ENCODE measurements at regions of chr6 and their contacts with region 1.

Region 1: GRCh38 chr6:42547407-42548329 is 16.2 kb upstream of the UBR2 start:
- DNase-seq: peak; percentile 92
- H3K4me3 Mint-ChIP-seq: peak overlapping the region; percentile 62
- H3K27ac Mint-ChIP-seq: no peak overlapping the region
- H3K4me1 Mint-ChIP-seq: peaks cover 23% of the 10 kb centered on the region
- H3K27me3 Mint-ChIP-seq: peaks cover 4% of the 10 kb centered on the region

Region 2: GRCh38 chr6:42260972-42261371 is 286.7 kb before region 1 on chr6:
- CTCF ChIA-PET with region 1: interaction called, 120 read pairs
- POLR2A ChIA-PET with region 1: interaction called, 4 read pairs
- intact Hi-C with region 1: loop called (anchors 2 kb)
- DNase-seq: peak; percentile 38
- H3K4me3 Mint-ChIP-seq: no peak overlapping the region
- H3K27ac Mint-ChIP-seq: no peak overlapping the region
- H3K4me1 Mint-ChIP-seq: no peaks in the 10 kb centered on the region
- H3K27me3 Mint-ChIP-seq: no peaks in the 10 kb centered on the region

Region 3: DNA sequence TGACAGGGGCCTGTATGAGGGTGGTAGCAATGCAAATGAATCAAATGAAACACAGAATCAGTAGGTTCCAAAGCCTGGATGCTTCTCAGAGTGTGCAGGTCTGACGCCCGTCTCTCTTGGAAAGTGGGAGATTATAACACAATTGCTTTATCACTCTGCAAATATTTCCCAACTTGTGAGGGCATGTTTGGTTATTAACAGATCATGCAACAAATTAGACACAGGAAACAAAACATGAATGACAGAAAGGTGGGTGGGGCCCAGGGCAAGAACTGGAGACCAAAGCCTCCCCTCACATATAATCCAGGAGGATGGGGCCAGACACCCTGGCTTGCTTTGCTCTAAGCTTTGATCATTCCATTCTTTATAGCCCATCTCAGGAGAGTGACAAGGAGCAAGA is 221.4 kb before region 1 on chr6:
- CTCF ChIA-PET with region 1: interaction called, 14 read pairs
- POLR2A ChIA-PET with region 1: no interaction called
- intact Hi-C with region 1: no loop called
- DNase-seq: no peak
- H3K4me3 Mint-ChIP-seq: no peak overlapping the region
- H3K27ac Mint-ChIP-seq: no peak overlapping the region
- H3K4me1 Mint-ChIP-seq: peaks cover 40% of the 10 kb centered on the region
- H3K27me3 Mint-ChIP-seq: no peaks in the 10 kb centered on the region

Region 4: DNA sequence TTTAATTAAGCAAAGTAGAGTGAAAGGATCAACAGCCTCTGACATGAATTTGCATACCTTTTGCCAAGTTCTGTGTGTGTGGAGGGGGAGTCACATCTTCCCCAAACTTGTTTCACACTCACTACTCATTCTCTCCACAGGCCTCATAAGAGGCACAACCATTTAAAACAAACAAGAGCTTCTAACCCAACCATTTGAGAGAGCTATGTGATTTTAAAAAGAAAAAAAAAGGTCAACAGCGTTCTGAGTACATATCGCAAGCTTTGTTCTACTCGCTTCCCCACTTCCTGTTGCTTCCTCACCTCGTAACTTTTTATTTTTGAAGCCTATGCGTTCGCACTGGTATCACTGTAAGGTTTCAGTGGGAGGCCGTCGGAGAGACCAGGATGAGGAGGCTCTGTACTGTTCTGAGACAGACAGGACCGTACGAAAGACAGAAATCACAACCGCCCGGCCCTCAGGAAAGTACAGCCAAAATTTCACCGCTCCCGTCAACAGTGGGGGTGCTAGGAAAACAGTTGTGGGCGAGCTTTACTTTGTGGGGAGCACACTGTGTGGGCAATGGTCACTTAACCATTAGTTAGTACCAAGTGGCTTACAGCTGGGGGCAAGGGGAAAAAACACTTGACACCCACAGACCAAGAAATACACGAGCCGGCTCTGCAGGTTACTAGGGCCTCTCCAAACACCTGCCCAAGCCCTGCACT is 157.3 kb before region 1 on chr6:
- CTCF ChIA-PET with region 1: interaction called, 43 read pairs
- POLR2A ChIA-PET with region 1: interaction called, 4 read pairs
- intact Hi-C with region 1: no loop called
- DNase-seq: peak; percentile 88
- H3K4me3 Mint-ChIP-seq: peak overlapping the region; percentile 71
- H3K27ac Mint-ChIP-seq: peak overlapping the region; percentile 98
- H3K4me1 Mint-ChIP-seq: peaks cover 96% of the 10 kb centered on the region
- H3K27me3 Mint-ChIP-seq: no peaks in the 10 kb centered on the region

Region 5: DNA sequence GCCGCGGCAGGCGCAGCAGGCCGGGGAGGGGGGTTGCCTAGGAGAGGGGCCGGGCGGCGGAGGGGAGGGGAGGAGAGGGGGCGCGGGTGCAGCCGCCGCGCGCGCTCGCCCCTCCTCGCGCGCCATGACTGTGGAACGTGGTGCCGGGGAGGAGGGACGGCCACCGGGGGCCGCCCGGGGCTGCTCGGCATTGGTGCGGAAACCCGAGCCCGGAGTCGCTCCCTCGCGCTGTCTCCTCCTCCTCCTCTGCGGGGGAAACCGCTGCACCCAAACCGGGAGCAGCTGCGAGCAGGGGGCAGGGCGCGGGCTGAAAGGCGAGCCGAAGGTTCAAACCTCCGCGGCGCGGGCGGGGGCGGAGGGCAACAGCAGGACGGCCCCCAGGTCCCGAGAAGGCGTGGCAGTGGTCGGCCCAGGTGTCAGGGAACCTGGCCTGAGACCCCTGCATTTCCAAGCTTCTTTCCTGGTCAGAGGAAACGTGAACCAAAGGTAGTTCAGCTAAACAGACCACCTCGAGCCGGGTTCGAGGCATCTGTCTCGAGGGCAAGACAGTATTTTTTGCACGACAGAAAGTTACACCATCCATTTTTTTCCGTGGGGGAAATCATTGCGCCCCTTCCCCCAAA is 94.5 kb before region 1 on chr6:
- CTCF ChIA-PET with region 1: interaction called, 24 read pairs
- POLR2A ChIA-PET with region 1: interaction called, 7 read pairs
- intact Hi-C with region 1: loop called (anchors 5 kb)
- DNase-seq: peak; percentile 86
- H3K4me3 Mint-ChIP-seq: peak overlapping the region; percentile 98
- H3K27ac Mint-ChIP-seq: no peak overlapping the region
- H3K4me1 Mint-ChIP-seq: peaks cover 23% of the 10 kb centered on the region
- H3K27me3 Mint-ChIP-seq: no peaks in the 10 kb centered on the region

Region 6: DNA sequence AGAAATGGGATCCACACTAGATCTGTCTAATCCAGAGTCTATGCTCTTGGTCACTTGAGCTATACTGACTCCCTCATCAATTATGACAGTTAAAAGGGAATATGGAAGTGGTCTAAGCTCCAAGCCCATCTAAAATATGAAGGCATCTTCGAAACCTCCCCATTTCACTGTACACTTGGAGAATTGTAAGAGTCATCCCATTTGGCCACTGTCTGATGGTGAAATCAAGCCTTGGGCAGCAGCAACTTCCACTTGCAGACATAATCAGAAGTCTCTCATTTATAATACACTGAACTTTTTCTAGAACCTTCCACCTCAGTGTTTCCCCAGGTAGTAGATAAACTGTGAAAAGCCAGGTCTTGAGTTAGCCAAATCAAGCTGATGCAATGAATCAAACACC is 10.1 kb before region 1 on chr6:
- CTCF ChIA-PET with region 1: interaction called, 42 read pairs
- POLR2A ChIA-PET with region 1: no interaction called
- intact Hi-C with region 1: no loop called
- DNase-seq: no peak
- H3K4me3 Mint-ChIP-seq: no peak overlapping the region
- H3K27ac Mint-ChIP-seq: no peak overlapping the region
- H3K4me1 Mint-ChIP-seq: no peaks in the 10 kb centered on the region
- H3K27me3 Mint-ChIP-seq: no peaks in the 10 kb centered on the region

Region 7: GRCh38 chr6:42735976-42736375 is 188.3 kb after region 1 on chr6:
- CTCF ChIA-PET with region 1: no interaction called
- POLR2A ChIA-PET with region 1: no interaction called
- intact Hi-C with region 1: no loop called
- DNase-seq: no peak
- H3K4me3 Mint-ChIP-seq: no peak overlapping the region
- H3K27ac Mint-ChIP-seq: no peak overlapping the region
- H3K4me1 Mint-ChIP-seq: no peaks in the 10 kb centered on the region
- H3K27me3 Mint-ChIP-seq: no peaks in the 10 kb centered on the region

Region 8: DNA sequence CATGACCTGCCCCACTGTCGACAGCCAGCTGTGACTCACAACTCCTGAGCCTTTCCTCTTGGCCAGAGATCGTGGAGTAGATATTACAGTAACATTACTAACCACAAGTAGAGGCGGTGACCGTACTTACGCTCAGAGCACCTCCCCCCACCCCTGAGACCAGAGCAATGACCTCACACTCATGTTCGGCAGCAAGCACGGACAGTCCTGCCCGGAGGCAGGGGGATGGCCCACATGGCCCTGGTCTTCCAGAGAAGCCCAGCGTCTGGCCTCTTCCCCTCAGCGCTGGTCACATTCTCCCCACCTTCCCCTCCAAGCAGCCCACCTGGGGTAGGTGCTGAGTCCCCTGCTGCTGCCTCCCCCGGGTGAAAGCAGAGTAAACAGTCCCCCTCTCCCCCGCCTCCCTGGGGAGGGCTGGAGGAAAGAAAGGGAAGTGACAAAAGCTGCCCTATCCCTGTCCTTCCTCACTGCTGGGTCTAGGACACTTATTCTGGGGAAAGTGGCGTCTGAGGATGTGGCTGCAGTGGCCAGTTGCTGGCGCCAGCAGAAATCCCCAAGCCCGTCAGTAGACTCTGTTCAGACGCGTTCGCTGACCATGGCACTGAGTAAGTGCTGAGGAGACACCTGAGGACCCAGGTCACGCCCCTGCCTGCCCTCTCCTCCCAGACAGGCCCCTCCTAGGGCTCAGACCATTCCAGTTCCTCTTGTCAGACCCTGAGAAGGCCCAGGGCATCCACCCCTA is 1511.1 kb after region 1 on chr6:
- CTCF ChIA-PET with region 1: no interaction called
- POLR2A ChIA-PET with region 1: no interaction called
- intact Hi-C with region 1: no loop called
- DNase-seq: peak; percentile 47
- H3K4me3 Mint-ChIP-seq: no peak overlapping the region
- H3K27ac Mint-ChIP-seq: no peak overlapping the region
- H3K4me1 Mint-ChIP-seq: peaks cover 5% of the 10 kb centered on the region
- H3K27me3 Mint-ChIP-seq: peaks cover 4% of the 10 kb centered on the region

Measured in activated CD4-positive, alpha-beta memory T cell treated with anti-CD3 and anti-CD28 coated beads for 36 hours (primary cell).